ENCODE measurements at regions of chr16 and their contacts with region 1.

Region 1: GRCh38 chr16:2278272-2278608 is 10.3 kb upstream of the RNPS1 start:
- DNase-seq: no peak
- H3K4me3 ChIP-seq: no peak overlapping the region
- H3K27ac ChIP-seq: no peak overlapping the region
- H3K4me1 ChIP-seq: no peaks in the 10 kb centered on the region
- H3K27me3 ChIP-seq: peaks cover 3% of the 10 kb centered on the region
- CTCF ChIP-seq: no peak

Region 2: GRCh38 chr16:2365397-2366294 is 87.4 kb after region 1 on chr16:
- CTCF ChIA-PET with region 1: no interaction called
- dilution Hi-C with region 1: no loop called
- in situ Hi-C with region 1: no loop called
- intact Hi-C with region 1: no loop called
- DNase-seq: peak; percentile 67
- H3K4me3 ChIP-seq: no peak overlapping the region
- H3K27ac ChIP-seq: no peak overlapping the region
- H3K4me1 ChIP-seq: peaks cover 24% of the 10 kb centered on the region
- H3K27me3 ChIP-seq: no peaks in the 10 kb centered on the region
- CTCF ChIP-seq: no peak

Region 3: GRCh38 chr16:2388875-2389433 is 110.7 kb after region 1 on chr16:
- CTCF ChIA-PET with region 1: no interaction called
- dilution Hi-C with region 1: loop called (anchors 5 kb)
- in situ Hi-C with region 1: no loop called
- intact Hi-C with region 1: no loop called
- DNase-seq: peak; percentile 76
- H3K4me3 ChIP-seq: no peak overlapping the region
- H3K27ac ChIP-seq: no peak overlapping the region
- H3K4me1 ChIP-seq: peaks cover 9% of the 10 kb centered on the region
- H3K27me3 ChIP-seq: no peaks in the 10 kb centered on the region
- CTCF ChIP-seq: no peak

Region 4: GRCh38 chr16:2500918-2501750 is 222.9 kb after region 1 on chr16:
- CTCF ChIA-PET with region 1: no interaction called
- dilution Hi-C with region 1: loop called (anchors 5 kb)
- in situ Hi-C with region 1: loop called (anchors 10 to 25 kb)
- intact Hi-C with region 1: no loop called
- DNase-seq: peak; percentile 49
- H3K4me3 ChIP-seq: no peak overlapping the region
- H3K27ac ChIP-seq: no peak overlapping the region
- H3K4me1 ChIP-seq: peaks cover 5% of the 10 kb centered on the region
- H3K27me3 ChIP-seq: no peaks in the 10 kb centered on the region
- CTCF ChIP-seq: peak; percentile 84 to 95

Region 5: DNA sequence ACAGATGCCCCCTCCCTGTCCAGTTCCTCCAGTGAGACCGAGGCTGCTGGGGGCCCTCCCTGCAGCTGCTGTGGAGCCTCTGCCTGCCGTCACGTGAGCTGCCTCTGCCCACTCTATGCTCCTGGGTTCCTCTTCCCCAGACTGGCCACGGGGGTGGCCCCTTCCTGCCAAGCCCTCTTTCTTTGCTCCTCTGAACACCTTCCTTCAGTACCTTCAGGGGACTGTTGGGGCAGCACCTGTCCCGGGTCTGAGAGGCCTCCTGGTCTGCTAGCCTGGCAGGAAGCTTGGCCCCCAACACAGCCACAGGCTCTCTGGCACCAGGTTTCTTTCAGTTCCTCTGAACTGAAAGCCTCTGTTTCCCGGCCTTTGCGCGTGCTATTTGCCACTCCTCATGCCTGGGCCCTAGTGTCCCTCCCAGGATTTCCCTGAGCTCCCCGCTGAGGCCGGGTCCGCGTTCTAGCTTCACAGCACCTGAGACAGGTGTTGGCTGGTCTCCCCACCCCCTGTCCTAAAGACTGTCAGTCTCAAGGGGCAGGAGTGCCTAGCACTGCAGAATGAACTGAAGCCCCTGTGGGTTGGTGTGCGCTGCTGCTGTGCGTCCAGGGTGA is 228.9 kb after region 1 on chr16:
- CTCF ChIA-PET with region 1: no interaction called
- dilution Hi-C with region 1: loop called (anchors 5 kb)
- in situ Hi-C with region 1: loop called in 1 of 2 experiments (anchors 10 kb)
- intact Hi-C with region 1: no loop called
- DNase-seq: no peak
- H3K4me3 ChIP-seq: no peak overlapping the region
- H3K27ac ChIP-seq: no peak overlapping the region
- H3K4me1 ChIP-seq: no peaks in the 10 kb centered on the region
- H3K27me3 ChIP-seq: no peaks in the 10 kb centered on the region
- CTCF ChIP-seq: no peak

Measured in mammary epithelial cell (primary cell).